CD8-positive, alpha-beta T cell (primary cell): ENCODE measurements at regions of chr10 and their contacts with region 1.

Region 1: DNA sequence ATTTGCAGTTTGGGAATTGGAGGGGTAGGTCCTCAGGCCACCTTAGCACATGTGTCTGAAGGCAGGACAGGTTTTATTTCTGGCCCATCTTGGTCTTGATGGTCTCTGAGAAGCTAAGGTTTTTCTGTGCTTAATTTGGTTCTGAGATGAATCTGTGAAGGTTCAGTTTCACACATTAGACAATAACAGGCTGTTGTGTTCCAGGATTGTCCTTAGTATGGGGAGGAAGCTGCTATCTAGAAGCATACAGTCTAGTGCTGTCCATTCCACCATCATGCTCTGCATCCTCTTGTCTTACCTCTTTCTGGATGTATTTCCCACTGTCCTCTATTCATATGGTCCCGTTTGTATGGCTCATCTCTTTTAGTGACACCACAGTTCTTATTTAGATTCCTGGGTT is 7.1 kb downstream of the UBE2D1 start:
- DNase-seq: no peak
- ATAC-seq: no peak
- H3K4me3 ChIP-seq: no peak overlapping the region
- H3K4me3 Mint-ChIP-seq: no peak overlapping the region
- H3K27ac ChIP-seq: no peak overlapping the region
- H3K27ac Mint-ChIP-seq: no peak overlapping the region
- H3K4me1 ChIP-seq: peaks cover 3% of the 10 kb centered on the region
- H3K4me1 Mint-ChIP-seq: peaks cover 57% of the 10 kb centered on the region
- H3K27me3 ChIP-seq: no peaks in the 10 kb centered on the region
- H3K27me3 Mint-ChIP-seq: no peaks in the 10 kb centered on the region
- CTCF ChIP-seq: no peak

Region 2: GRCh38 chr10:57864765-57865676 is 476.9 kb before region 1 on chr10:
- CTCF ChIA-PET with region 1: no interaction called
- POLR2A ChIA-PET with region 1: no interaction called
- intact Hi-C with region 1: no loop called
- DNase-seq: no peak
- ATAC-seq: no peak
- H3K4me3 ChIP-seq: no peak overlapping the region
- H3K4me3 Mint-ChIP-seq: no peak overlapping the region
- H3K27ac ChIP-seq: no peak overlapping the region
- H3K27ac Mint-ChIP-seq: no peak overlapping the region
- H3K4me1 ChIP-seq: no peaks in the 10 kb centered on the region
- H3K4me1 Mint-ChIP-seq: no peaks in the 10 kb centered on the region
- H3K27me3 ChIP-seq: no peaks in the 10 kb centered on the region
- H3K27me3 Mint-ChIP-seq: no peaks in the 10 kb centered on the region
- CTCF ChIP-seq: no peak

Region 3: GRCh38 chr10:58152673-58153263 is 189.2 kb before region 1 on chr10:
- CTCF ChIA-PET with region 1: no interaction called
- POLR2A ChIA-PET with region 1: no interaction called
- intact Hi-C with region 1: no loop called
- DNase-seq: peak in 5 of 9 experiments; percentile 20 to 31 (median 24)
- ATAC-seq: no peak
- H3K4me3 ChIP-seq: no peak overlapping the region
- H3K4me3 Mint-ChIP-seq: no peak overlapping the region
- H3K27ac ChIP-seq: no peak overlapping the region
- H3K27ac Mint-ChIP-seq: no peak overlapping the region
- H3K4me1 ChIP-seq: no peaks in the 10 kb centered on the region
- H3K4me1 Mint-ChIP-seq: no peaks in the 10 kb centered on the region
- H3K27me3 ChIP-seq: no peaks in the 10 kb centered on the region
- H3K27me3 Mint-ChIP-seq: peaks cover 27% of the 10 kb centered on the region
- CTCF ChIP-seq: peak; percentile 24

Region 4: DNA sequence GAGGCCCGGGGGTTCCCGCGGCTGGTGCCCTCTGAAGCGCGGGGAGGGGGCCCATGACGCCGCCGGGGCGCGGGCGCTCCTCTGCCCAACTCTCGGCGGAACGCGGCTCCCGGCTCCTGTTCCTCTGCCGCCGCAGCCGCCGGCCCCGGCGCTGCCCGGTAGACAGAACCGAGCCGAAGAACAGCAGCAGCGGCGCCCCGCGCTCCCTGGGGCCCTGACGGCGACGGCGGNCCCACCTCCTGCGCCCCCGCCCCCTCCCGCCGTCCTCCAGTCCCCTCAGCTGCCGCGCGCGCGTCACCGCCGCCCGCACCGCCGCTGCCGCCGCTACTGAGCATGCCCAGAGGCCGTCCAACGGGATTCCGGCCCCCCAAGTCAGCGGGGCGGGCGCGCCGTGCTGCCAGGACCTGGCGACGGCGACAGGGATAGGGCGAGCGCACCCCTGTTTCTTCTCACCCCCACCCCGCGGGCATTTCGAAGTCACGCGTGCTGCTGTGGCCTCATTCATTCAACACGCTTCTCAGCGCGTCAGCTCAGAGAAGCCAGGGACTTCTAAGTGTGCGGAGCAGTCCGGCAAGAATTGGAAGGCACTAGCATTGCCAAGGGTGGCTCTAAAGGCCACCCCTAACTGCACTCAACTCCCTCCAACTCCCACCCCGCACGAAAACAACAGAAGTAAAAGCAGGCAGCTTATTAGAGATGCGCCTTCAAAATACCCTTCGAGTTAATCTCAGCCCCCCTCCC is 74.1 kb before region 1 on chr10 and contains the start of gene IPMK:
- CTCF ChIA-PET with region 1: no interaction called
- POLR2A ChIA-PET with region 1: no interaction called
- intact Hi-C with region 1: no loop called
- DNase-seq: peak; percentile 92 to 99 (median 96)
- ATAC-seq: peak; percentile 67
- H3K4me3 ChIP-seq: peak within 1 kb of the TSS; percentile 83 to 84
- H3K4me3 Mint-ChIP-seq: peak within 1 kb of the TSS; percentile 97
- H3K27ac ChIP-seq: peak within 1 kb of the TSS; percentile 86
- H3K27ac Mint-ChIP-seq: peak within 1 kb of the TSS; percentile 97
- H3K4me1 ChIP-seq: peaks cover 30% of the 10 kb centered on the region
- H3K4me1 Mint-ChIP-seq: peaks cover 60% of the 10 kb centered on the region
- H3K27me3 ChIP-seq: no peaks in the 10 kb centered on the region
- H3K27me3 Mint-ChIP-seq: no peaks in the 10 kb centered on the region
- CTCF ChIP-seq: no peak
- total RNA-seq, gene IPMK: 1.7 to 2.0 TPM

Region 5: GRCh38 chr10:58352956-58353610 is 11.1 kb after region 1 on chr10:
- CTCF ChIA-PET with region 1: interaction called, 3 read pairs
- POLR2A ChIA-PET with region 1: no interaction called
- intact Hi-C with region 1: loop called in 1 of 2 experiments (anchors 1 kb)
- DNase-seq: no peak
- ATAC-seq: no peak
- H3K4me3 ChIP-seq: no peak overlapping the region
- H3K4me3 Mint-ChIP-seq: no peak overlapping the region
- H3K27ac ChIP-seq: no peak overlapping the region
- H3K27ac Mint-ChIP-seq: no peak overlapping the region
- H3K4me1 ChIP-seq: peaks cover under 1% of the 10 kb centered on the region
- H3K4me1 Mint-ChIP-seq: peaks cover 49% of the 10 kb centered on the region
- H3K27me3 ChIP-seq: no peaks in the 10 kb centered on the region
- H3K27me3 Mint-ChIP-seq: no peaks in the 10 kb centered on the region
- CTCF ChIP-seq: no peak

Region 6: DNA sequence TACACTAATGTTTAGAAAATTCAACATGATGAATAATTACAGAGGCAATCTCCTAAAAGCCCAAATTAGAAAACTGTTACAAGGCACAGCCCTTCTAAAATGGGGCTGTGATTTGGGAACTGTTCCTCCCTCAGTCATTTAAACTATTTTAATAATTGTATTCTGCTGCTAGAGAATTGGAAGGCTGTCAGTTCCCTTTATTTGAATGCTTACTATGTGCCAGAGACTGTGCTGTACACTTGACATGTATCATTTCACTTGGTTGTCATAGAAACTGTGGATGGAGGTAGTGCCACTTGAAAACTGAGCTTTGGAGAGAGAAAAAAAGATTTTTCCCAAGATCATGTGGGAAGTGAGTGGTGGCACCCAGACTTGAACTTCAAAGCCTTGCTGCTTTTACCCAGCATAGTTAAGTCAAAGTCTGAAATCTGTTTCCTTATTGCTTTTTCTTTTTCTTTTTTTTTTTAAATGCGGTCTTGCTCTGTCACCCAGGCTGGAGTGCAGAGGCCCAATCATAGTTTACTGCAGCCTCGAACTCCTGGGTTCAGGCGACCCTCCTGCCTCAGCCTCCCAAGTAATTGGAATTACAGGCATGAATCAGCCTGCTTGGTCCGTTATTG is 16.5 kb after region 1 on chr10:
- CTCF ChIA-PET with region 1: interaction called, 3 read pairs
- POLR2A ChIA-PET with region 1: no interaction called
- intact Hi-C with region 1: loop called in 1 of 2 experiments (anchors 1 kb)
- DNase-seq: no peak
- ATAC-seq: no peak
- H3K4me3 ChIP-seq: no peak overlapping the region
- H3K4me3 Mint-ChIP-seq: no peak overlapping the region
- H3K27ac ChIP-seq: no peak overlapping the region
- H3K27ac Mint-ChIP-seq: no peak overlapping the region
- H3K4me1 ChIP-seq: peaks cover 20% of the 10 kb centered on the region
- H3K4me1 Mint-ChIP-seq: peaks cover 35% of the 10 kb centered on the region
- H3K27me3 ChIP-seq: no peaks in the 10 kb centered on the region
- H3K27me3 Mint-ChIP-seq: no peaks in the 10 kb centered on the region
- CTCF ChIP-seq: no peak